MCF 10A (cell line): ENCODE measurements at regions of chr11 and their contacts with region 1.

Region 1: DNA sequence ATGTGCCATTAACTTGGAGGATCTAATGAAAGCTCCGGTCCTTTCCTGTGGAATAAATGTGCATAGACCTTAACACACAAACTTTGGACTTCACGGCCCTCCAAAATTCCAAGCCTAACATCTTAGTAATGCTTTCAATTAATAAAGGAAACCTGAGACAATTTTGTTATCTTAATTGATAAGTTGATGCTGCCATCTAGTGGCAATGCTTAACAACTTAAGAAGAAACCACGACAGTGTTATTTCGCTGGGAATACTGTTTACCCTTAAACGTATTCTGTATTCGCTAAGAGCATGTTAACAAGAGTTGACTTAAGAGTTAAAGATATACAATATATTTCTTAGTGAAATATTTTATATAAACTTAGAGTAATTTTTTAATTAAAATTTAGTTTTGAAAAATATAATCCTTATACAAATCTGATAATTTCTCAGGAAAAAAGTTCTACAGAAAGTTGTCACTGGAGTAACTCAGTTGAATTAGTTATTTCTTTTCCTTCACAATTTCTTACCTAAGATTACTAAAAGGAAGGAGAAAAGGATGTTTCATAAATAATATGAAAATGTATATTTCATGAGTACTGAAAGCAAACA is 35.0 kb upstream of the OR9G4 start:
- DNase-seq: peak; percentile 66
- H3K4me3 Mint-ChIP-seq: no peak overlapping the region
- H3K27ac Mint-ChIP-seq: no peak overlapping the region
- H3K4me1 Mint-ChIP-seq: no peaks in the 10 kb centered on the region
- H3K27me3 Mint-ChIP-seq: no peaks in the 10 kb centered on the region
- CTCF ChIP-seq: peak; percentile 71

Region 2: GRCh38 chr11:55714982-55715888 is 1068.3 kb before region 1 on chr11:
- CTCF ChIA-PET with region 1: no interaction called
- POLR2A ChIA-PET with region 1: no interaction called
- intact Hi-C with region 1: loop called (anchors 5 kb)
- DNase-seq: no peak
- H3K4me3 Mint-ChIP-seq: no peak overlapping the region
- H3K27ac Mint-ChIP-seq: no peak overlapping the region
- H3K4me1 Mint-ChIP-seq: no peaks in the 10 kb centered on the region
- H3K27me3 Mint-ChIP-seq: no peaks in the 10 kb centered on the region
- CTCF ChIP-seq: no peak

Region 3: GRCh38 chr11:55942785-55943392 is 840.7 kb before region 1 on chr11:
- CTCF ChIA-PET with region 1: interaction called, 3 read pairs
- POLR2A ChIA-PET with region 1: no interaction called
- intact Hi-C with region 1: loop called (anchors 1 kb)
- DNase-seq: peak; percentile 23
- H3K4me3 Mint-ChIP-seq: no peak overlapping the region
- H3K27ac Mint-ChIP-seq: no peak overlapping the region
- H3K4me1 Mint-ChIP-seq: no peaks in the 10 kb centered on the region
- H3K27me3 Mint-ChIP-seq: no peaks in the 10 kb centered on the region
- CTCF ChIP-seq: peak; percentile 48

Region 4: GRCh38 chr11:56271092-56271491 is 512.5 kb before region 1 on chr11:
- CTCF ChIA-PET with region 1: interaction called, 11 read pairs
- POLR2A ChIA-PET with region 1: no interaction called
- intact Hi-C with region 1: no loop called
- DNase-seq: no peak
- H3K4me3 Mint-ChIP-seq: no peak overlapping the region
- H3K27ac Mint-ChIP-seq: no peak overlapping the region
- H3K4me1 Mint-ChIP-seq: no peaks in the 10 kb centered on the region
- H3K27me3 Mint-ChIP-seq: no peaks in the 10 kb centered on the region
- CTCF ChIP-seq: no peak

Region 5: GRCh38 chr11:56522008-56522407 is 261.5 kb before region 1 on chr11:
- CTCF ChIA-PET with region 1: interaction called, 3 read pairs
- POLR2A ChIA-PET with region 1: no interaction called
- intact Hi-C with region 1: loop called (anchors 2 kb)
- DNase-seq: peak; percentile 5
- H3K4me3 Mint-ChIP-seq: no peak overlapping the region
- H3K27ac Mint-ChIP-seq: no peak overlapping the region
- H3K4me1 Mint-ChIP-seq: no peaks in the 10 kb centered on the region
- H3K27me3 Mint-ChIP-seq: no peaks in the 10 kb centered on the region
- CTCF ChIP-seq: peak; percentile 25

Region 6: DNA sequence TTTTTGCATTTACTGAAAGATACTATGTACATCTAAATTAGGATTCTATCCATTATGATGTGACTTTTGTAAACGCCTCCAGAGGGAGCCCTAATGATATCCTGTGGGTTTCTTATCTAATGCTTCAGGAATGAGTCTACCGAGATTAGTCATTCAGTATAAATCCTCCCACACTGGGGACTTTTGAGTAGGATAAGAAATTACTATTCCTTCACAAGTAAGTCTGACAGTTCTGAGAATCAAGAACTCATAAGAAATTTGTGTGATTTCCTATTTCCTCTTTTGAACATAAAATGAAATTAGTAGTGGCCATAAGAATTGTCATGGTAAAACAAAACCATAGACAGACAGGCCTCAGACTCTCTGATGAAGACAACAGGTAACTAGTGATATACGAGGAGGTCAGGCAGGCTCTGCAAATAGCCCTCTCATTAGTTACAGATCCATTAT is 158.9 kb before region 1 on chr11:
- CTCF ChIA-PET with region 1: interaction called, 111 read pairs
- POLR2A ChIA-PET with region 1: interaction called, 3 read pairs
- intact Hi-C with region 1: loop called (anchors 1 kb)
- DNase-seq: peak; percentile 77
- H3K4me3 Mint-ChIP-seq: no peak overlapping the region
- H3K27ac Mint-ChIP-seq: no peak overlapping the region
- H3K4me1 Mint-ChIP-seq: no peaks in the 10 kb centered on the region
- H3K27me3 Mint-ChIP-seq: peaks cover 17% of the 10 kb centered on the region
- CTCF ChIP-seq: peak; percentile 41

Region 7: DNA sequence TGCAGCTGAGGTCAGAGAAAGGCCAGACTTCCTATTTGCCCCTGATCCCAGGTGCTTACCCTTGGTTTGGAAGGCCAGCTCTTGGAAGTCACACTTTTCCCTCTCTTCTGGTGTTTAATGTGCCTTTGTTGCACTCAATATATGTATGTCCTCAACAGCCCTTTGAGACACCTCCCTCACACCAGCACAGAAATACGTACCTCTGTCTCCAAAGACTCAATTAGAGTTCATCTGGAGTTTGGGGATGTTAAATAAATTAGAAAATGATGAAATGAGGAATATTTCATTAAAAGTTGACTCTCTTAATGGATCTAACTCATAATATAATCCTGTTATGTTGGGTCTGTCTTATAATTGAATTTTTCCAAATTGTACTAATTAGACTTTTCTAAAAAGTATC is 34.9 kb before region 1 on chr11 and contains the start of gene OR9G4:
- CTCF ChIA-PET with region 1: no interaction called
- POLR2A ChIA-PET with region 1: no interaction called
- intact Hi-C with region 1: no loop called
- DNase-seq: no peak
- H3K4me3 Mint-ChIP-seq: no peak within 1 kb of the TSS
- H3K27ac Mint-ChIP-seq: no peak within 1 kb of the TSS
- H3K4me1 Mint-ChIP-seq: no peaks in the 10 kb centered on the region
- H3K27me3 Mint-ChIP-seq: peaks cover 12% of the 10 kb centered on the region
- CTCF ChIP-seq: no peak
- total RNA-seq, gene OR9G4: not detected in 2 replicates